Pancreas (tissue), 10 donors: ENCODE measurements at regions of chr11 and their contacts with region 1.

Region 1: GRCh38 chr11:128956401-128957201 is 13.9 kb upstream of the TP53AIP1 start:
- DNase-seq: peak in 3 of 6 donors; percentile 41 to 60 (median 43)
- ATAC-seq: peak; percentile 80 to 97 (median 94)
- H3K4me3 ChIP-seq: no peak overlapping the region
- H3K27ac ChIP-seq: no peak overlapping the region
- H3K4me1 ChIP-seq: peaks cover 0 to 6% (median 0%) of the 10 kb centered on the region in 3 donors
- H3K27me3 ChIP-seq: no peaks in the 10 kb centered on the region
- CTCF ChIP-seq: peak; percentile 27 to 62 (median 52)

Region 2: DNA sequence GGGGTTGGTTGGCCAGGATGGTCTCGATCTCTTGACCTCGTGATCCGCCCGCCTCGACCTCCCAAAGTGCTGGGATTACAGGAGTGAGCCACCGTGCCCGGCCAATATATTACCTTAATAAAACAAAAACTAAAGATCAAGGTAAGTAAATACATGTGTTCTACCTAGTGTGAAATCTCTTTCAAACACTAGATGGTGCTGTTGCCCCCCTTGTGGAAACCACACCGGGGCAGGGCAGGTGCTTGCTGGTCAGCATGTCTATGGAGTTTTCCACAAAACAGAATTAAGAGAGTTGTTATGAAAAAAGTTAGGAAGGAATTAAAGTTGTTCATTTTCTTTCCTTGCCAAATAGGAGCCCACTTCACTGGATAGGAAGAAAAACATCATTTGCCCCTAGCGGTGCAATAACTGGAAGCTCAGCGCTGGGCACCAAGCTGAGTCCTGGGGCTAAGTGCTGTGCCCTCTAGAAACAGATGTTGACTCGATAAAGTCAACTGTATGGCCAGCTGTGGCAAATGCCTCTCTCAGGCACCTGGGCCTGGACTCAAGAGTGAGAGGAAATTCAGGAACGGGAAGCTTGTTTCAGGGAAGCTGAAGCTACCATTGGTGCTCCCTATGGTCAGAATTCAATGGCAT is 71.8 kb before region 1 on chr11:
- intact Hi-C with region 1: loop called (anchors 2 to 10 kb)
- DNase-seq: peak in 4 of 6 donors; percentile 60 to 81 (median 68)
- ATAC-seq: peak; percentile 78 to 84 (median 78)
- H3K4me3 ChIP-seq: no peak overlapping the region
- H3K27ac ChIP-seq: no peak overlapping the region
- H3K4me1 ChIP-seq: peaks cover 12 to 28% (median 18%) of the 10 kb centered on the region in 3 donors
- H3K27me3 ChIP-seq: no peaks in the 10 kb centered on the region
- CTCF ChIP-seq: peak; percentile 73 to 89 (median 82)